ENCODE measurements at regions of chr10 and their contacts with region 1.

Region 1: GRCh38 chr10:101569838-101570766 is 18.0 kb downstream of the POLL start:
- DNase-seq: no peak
- ATAC-seq: peak; percentile 87
- H3K4me3 ChIP-seq: peak overlapping the region; percentile 71 to 94
- H3K27ac ChIP-seq: peak overlapping the region; percentile 75
- H3K4me1 ChIP-seq: peaks cover 7% of the 10 kb centered on the region; the same call in 1 of the 2 replicates
- H3K27me3 ChIP-seq: peaks cover 7% of the 10 kb centered on the region
- CTCF ChIP-seq: peak; percentile 97

Region 2: GRCh38 chr10:100403734-100404133 is 1166.4 kb before region 1 on chr10:
- CTCF ChIA-PET with region 1: no interaction called
- POLR2A ChIA-PET with region 1: no interaction called
- in situ Hi-C with region 1: no loop called
- intact Hi-C with region 1: no loop called
- DNase-seq: no peak
- ATAC-seq: no peak
- H3K4me3 ChIP-seq: no peak overlapping the region
- H3K27ac ChIP-seq: no peak overlapping the region
- H3K4me1 ChIP-seq: no peaks in the 10 kb centered on the region
- H3K27me3 ChIP-seq: no peaks in the 10 kb centered on the region
- CTCF ChIP-seq: no peak

Region 3: DNA sequence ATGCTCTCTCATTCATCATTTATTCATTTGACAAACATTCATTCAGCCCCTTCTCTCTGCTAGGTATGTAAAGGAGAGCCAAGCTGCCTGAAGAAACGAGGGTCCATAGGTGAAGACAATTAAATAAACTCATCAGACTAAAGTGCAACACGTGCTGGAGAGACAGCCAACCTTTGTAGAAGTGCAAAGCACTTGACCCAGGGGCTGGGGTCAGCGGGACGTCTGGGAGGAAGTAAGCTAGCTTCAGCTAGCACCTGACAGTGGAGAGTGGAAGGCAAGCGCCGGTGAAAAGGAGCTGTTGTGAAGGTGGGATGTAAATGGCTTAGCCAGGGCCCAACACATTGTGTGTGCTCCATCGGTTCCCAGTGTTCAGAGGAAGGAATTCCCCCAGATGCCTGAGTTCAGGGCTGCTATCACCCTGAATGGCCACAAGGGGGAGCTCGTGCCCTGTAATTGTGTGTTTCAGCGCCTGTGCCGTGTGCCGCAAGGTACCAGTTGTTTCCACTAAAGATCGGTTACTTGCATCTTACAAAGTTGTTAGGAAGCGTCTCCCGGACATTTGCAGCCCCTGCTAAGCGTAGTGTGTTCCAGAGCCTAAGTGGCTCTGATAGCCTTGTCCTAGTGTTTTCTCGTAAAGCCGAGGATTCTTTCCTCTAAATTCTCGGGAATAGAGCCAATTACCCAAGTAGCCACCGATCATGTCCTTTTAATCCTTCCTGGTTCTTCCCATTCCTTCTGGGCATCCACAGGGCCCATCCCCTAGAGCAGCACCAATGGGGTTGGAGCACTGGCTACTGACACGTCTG is 408.4 kb before region 1 on chr10:
- CTCF ChIA-PET with region 1: interaction called, 16 read pairs
- POLR2A ChIA-PET with region 1: no interaction called
- in situ Hi-C with region 1: no loop called
- intact Hi-C with region 1: no loop called
- DNase-seq: peak; percentile 72
- ATAC-seq: peak; percentile 96
- H3K4me3 ChIP-seq: peak overlapping the region; percentile 30 to 62
- H3K27ac ChIP-seq: no peak overlapping the region
- H3K4me1 ChIP-seq: peaks cover 12% of the 10 kb centered on the region; the same call in 1 of the 2 replicates
- H3K27me3 ChIP-seq: peaks cover 19% of the 10 kb centered on the region
- CTCF ChIP-seq: peak; percentile 98

Region 4: DNA sequence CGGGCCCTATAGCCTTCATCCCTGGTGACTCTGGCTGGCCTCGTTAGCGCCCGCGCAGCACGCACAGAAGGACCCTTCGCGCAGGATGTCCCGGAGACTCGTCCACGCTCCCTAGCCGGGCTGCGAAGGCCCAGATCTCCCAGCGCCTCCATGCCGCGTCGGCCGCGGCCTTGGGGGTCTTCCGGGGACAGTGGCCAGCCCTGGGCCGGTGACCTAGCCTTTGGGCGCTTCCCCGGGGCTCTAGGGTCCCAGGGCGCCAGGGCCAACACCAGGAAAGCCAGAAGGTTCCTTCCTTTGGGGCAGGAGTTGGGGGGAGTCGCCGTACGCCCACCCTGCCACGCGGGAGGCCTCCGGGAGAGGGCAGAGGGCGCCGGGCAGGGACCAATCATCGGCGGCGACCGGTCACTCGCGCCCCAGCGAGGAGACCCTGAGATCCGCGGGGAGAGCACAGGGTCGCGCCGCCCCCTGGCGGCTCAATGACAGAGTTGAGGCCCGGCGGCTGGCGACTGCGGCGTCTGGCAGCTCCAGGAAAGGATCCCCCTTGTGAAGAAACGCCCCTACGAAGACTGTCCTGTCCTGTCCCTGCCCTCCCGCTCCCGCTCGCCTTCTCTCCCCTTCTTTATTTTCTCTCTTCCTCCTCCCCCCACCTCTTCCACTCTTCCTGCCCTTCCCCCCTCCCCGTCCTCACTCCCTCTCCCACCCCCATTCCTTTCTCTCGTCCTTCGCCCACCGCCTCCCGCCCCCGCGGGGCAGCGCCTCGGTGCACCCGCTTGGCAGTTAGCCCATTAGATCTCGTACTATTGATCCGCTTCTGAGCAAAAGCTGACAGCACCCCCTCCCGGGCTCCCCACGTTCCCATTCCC is 278.5 kb before region 1 on chr10:
- CTCF ChIA-PET with region 1: interaction called, 10 read pairs
- POLR2A ChIA-PET with region 1: interaction called, 5 read pairs
- in situ Hi-C with region 1: no loop called
- intact Hi-C with region 1: no loop called
- DNase-seq: no peak
- ATAC-seq: peak; percentile 88
- H3K4me3 ChIP-seq: peak overlapping the region; percentile 43 to 56
- H3K27ac ChIP-seq: no peak overlapping the region
- H3K4me1 ChIP-seq: no peaks in the 10 kb centered on the region
- H3K27me3 ChIP-seq: peaks cover 2% of the 10 kb centered on the region; the same call in 1 of the 2 replicates
- CTCF ChIP-seq: peak; percentile 95

Region 5: GRCh38 chr10:101467286-101467770 is 102.8 kb before region 1 on chr10:
- CTCF ChIA-PET with region 1: interaction called, 10 read pairs
- POLR2A ChIA-PET with region 1: no interaction called
- in situ Hi-C with region 1: no loop called
- intact Hi-C with region 1: no loop called
- DNase-seq: peak; percentile 76
- ATAC-seq: peak; percentile 94
- H3K4me3 ChIP-seq: no peak overlapping the region
- H3K27ac ChIP-seq: no peak overlapping the region
- H3K4me1 ChIP-seq: peaks cover 5% of the 10 kb centered on the region; the same call in 1 of the 2 replicates
- H3K27me3 ChIP-seq: no peaks in the 10 kb centered on the region
- CTCF ChIP-seq: peak; percentile 87; the same call in 1 of the 2 replicates

Region 6: GRCh38 chr10:101550965-101551364 is 19.1 kb before region 1 on chr10:
- CTCF ChIA-PET with region 1: interaction called, 16 read pairs
- POLR2A ChIA-PET with region 1: no interaction called
- in situ Hi-C with region 1: no loop called
- intact Hi-C with region 1: no loop called
- DNase-seq: no peak
- ATAC-seq: no peak
- H3K4me3 ChIP-seq: no peak overlapping the region
- H3K27ac ChIP-seq: no peak overlapping the region
- H3K4me1 ChIP-seq: no peaks in the 10 kb centered on the region
- H3K27me3 ChIP-seq: no peaks in the 10 kb centered on the region
- CTCF ChIP-seq: no peak